ENCODE measurements at regions of chr15 and their contacts with region 1.

Region 1: DNA sequence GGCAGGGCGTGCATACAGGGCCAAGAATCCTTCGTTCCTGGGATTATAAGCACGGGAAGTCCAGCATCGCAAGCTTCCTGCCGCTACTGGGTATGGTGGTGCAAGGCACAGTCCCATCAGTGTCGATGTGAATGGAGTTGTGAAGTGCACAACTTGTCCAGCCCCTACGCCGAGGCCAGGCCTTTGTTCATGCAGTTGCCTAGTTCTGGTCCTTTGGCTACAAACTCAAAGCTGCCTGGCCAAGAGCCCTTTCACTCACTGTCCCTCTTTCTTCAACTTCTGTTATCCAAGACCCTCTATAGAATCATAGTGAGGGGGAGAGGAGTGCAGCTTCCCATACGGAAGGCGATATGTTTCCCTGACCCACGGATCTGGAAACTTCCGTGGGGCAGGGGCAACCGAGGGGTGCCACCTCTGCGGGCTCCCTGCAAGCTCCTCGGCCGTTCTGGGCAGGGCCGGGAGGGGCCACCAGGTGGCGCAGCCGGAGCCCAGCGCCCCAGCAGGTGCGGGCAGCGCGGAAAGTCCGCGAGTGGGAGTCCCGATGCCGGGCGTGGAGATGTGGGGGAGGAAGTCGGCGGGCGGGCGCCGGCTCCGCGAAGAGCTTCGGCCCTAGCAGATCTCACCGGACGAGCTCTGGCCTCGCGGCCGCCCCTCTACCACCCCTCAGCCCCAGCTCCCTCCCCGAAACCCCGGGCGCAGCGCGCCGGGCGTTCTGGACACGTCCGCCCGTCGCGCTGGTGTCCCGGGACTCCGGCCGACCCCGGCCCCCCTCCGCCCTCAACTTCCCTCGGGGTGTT is 693 bp downstream of the RASGRP1 start:
- DNase-seq: peak; percentile 8
- ATAC-seq: peak; percentile 92
- H3K4me3 ChIP-seq: peak overlapping the region; percentile 41 to 53
- H3K27ac ChIP-seq: no peak overlapping the region; the same call in 1 of the 2 replicates
- H3K4me1 ChIP-seq: peaks cover 2 to 12% of the 10 kb centered on the region in 2 experiments; a peak in 1 of 4 replicates
- H3K27me3 ChIP-seq: 0 out of 2 replicates have a peak, but pooled peaks cover 4% of the 10 kb centered on the region
- CTCF ChIP-seq: peak; percentile 55 to 94 (median 83)
- POLR2A ChIP-seq: no peak
- RAD21 ChIP-seq: peak; percentile 37; the same call in 1 of the 2 replicates

Region 2: GRCh38 chr15:38002883-38003477 is 560.9 kb before region 1 on chr15:
- CTCF ChIA-PET with region 1: no interaction called
- POLR2A ChIA-PET with region 1: no interaction called
- RAD21 ChIA-PET with region 1: no interaction called
- intact Hi-C with region 1: loop called (anchors 10 kb)
- DNase-seq: peak; percentile 61
- ATAC-seq: peak; percentile 92
- H3K4me3 ChIP-seq: no peak overlapping the region
- H3K27ac ChIP-seq: no peak overlapping the region
- H3K4me1 ChIP-seq: no peaks in the 10 kb centered on the region
- H3K27me3 ChIP-seq: no peaks in the 10 kb centered on the region
- CTCF ChIP-seq: peak; percentile 52 to 57 (median 55); a peak in 5 of 6 replicates
- POLR2A ChIP-seq: no peak
- RAD21 ChIP-seq: peak; percentile 78

Region 3: DNA sequence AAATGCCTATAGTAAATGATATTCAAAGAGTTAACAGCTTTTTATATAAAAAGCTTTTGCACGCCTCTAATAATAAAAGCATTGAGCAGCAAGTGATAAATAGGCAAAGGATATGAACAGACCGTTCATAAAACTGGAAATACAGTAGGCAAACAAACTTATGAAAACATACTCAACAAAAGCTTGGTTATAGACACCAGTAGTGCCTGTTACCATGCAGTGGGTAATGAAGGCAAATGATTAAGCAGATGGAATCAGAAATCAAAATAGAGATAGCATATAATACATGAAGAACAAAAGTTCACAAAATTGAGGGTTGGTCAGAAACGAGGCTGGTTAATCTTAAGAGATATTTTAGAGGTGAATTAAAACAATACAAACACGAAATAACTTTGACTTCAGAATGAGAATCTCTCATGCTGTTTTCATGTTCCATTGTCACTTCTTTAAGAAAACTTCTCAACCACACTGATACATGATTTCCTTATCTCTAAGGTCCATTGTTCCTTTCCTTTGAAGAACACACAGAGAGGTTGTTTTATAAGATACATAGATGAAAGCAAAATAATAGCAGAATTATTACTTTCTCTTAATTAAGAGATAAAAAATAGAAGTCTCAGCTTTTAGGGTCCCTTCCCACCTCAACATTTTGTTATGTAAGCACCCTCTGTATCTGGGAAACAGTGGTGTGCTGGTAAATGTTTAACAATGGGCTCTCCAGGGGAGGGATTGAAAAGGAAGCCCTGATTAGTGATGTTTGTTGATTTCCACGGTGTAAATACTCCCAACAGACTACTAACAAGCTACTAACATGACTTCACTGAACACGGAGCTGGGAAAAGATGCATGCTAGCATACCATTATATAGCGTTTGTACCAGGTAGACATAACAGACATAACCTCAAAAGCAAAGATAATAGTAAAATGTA is 11.9 kb before region 1 on chr15:
- CTCF ChIA-PET with region 1: interaction called, 14 read pairs
- POLR2A ChIA-PET with region 1: no interaction called
- RAD21 ChIA-PET with region 1: no interaction called
- intact Hi-C with region 1: no loop called
- DNase-seq: no peak
- ATAC-seq: no peak
- H3K4me3 ChIP-seq: no peak overlapping the region
- H3K27ac ChIP-seq: no peak overlapping the region
- H3K4me1 ChIP-seq: no peaks in the 10 kb centered on the region
- H3K27me3 ChIP-seq: peaks cover 12% of the 10 kb centered on the region; the same call in 1 of the 2 replicates
- CTCF ChIP-seq: no peak
- POLR2A ChIP-seq: no peak
- RAD21 ChIP-seq: no peak

Region 4: DNA sequence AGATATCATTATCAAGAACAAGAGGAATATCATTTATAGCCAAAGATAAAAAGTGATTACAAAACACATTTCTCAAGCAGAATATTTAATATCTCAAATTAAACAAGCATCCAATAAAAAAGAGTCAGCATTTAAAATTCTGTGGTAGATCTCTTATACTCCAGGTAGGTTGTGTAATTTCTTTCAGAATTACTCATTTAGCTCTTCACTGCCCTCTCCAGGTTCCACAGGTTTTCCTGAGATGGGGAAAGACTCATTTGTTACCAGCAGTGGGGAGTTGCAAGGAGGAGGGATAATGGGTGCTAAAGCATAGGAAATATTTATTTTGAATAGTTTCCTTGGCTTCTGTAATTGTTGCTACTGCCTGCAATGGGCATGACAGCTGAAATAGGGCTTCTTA is 83.8 kb after region 1 on chr15:
- CTCF ChIA-PET with region 1: interaction called, 16 read pairs
- POLR2A ChIA-PET with region 1: no interaction called
- RAD21 ChIA-PET with region 1: interaction called in 1 of 2 experiments, 3 read pairs
- intact Hi-C with region 1: loop called (anchors 1 kb)
- DNase-seq: peak; percentile 8
- ATAC-seq: peak; percentile 72
- H3K4me3 ChIP-seq: no peak overlapping the region
- H3K27ac ChIP-seq: no peak overlapping the region
- H3K4me1 ChIP-seq: no peaks in the 10 kb centered on the region
- H3K27me3 ChIP-seq: no peaks in the 10 kb centered on the region
- CTCF ChIP-seq: peak; percentile 19 to 50 (median 39); a peak in 5 of 6 replicates
- POLR2A ChIP-seq: no peak
- RAD21 ChIP-seq: peak; percentile 33

Region 5: DNA sequence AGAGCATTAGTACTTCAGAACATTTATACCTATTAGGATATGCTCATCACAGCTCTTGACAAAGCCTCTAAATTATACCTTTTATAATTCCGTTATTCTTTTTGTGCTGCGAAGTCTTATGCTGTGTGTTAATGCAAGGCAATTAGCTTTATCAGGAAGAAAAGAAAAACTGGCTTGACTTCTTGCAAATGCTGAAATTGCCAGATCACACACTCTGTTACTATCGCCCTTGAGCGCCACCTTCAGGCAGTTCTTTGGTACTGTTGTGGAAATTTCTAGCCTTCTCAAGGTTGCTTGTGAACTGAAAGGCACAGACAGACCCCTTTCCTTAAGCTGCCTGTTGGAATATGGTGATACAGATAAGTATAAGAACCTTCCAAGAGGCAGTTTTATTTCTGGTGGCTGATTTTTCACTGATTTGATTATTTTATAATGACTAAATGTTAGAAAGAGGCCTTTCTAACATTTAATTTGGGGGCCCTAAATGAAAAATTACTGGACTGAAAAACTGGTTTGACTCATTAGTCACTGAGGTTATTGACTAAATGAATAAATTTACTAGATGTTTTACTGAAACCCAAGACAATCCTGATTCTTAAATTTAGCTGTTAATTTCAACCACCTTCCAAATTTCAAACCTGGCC is 126.9 kb after region 1 on chr15:
- CTCF ChIA-PET with region 1: interaction called, 20 read pairs
- POLR2A ChIA-PET with region 1: no interaction called
- RAD21 ChIA-PET with region 1: no interaction called
- intact Hi-C with region 1: no loop called
- DNase-seq: peak; percentile 61
- ATAC-seq: peak; percentile 82
- H3K4me3 ChIP-seq: no peak overlapping the region
- H3K27ac ChIP-seq: no peak overlapping the region
- H3K4me1 ChIP-seq: peaks cover 0 to 10% of the 10 kb centered on the region in 2 experiments; a peak in 1 of 4 replicates
- H3K27me3 ChIP-seq: no peaks in the 10 kb centered on the region
- CTCF ChIP-seq: peak; percentile 27 to 88 (median 82); a peak in 5 of 6 replicates
- POLR2A ChIP-seq: no peak
- RAD21 ChIP-seq: peak; percentile 43

Measured in HCT116 (cell line).